CD8-positive, alpha-beta T cell (primary cell): ENCODE measurements at regions of chr22 and their contacts with region 1.

Region 1: DNA sequence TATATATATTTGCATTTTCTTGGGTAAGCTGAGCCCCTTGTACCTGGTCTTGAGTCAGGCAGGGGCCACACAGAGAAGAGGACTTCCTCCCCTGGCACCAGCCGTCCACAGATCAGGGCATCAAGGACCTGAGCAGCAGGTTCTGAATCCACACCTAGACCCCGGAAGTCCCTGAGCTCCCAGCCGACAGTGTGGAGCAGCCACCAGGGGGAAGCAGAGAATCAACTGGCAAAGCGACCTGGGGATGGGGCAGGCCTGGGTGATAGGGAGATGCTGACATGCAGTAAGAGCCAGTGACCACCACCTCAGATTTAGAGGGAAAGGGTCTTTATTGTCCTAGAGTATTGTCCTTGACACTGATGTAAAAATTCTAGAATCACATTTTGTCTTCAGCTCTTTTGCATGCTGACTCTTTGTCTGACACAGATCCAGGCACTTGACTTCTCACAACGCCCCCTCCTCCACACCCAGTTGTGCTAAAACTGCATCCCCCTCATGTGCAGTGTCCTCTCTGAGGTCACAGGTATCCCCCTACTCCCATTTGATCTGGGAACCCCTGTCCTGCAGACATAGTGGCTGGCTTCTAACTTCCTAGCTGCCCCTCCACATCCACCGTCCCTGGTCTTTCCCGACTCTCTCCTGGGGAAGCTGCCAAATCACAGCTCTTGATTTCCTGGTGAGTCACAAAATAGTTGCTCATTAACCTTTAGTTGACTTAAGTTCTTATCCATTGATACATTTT is 109.3 kb downstream of the GGTLC2 start:
- DNase-seq: peak; percentile 63 to 90 (median 83)
- ATAC-seq: peak; percentile 85
- H3K4me3 ChIP-seq: peak overlapping the region in 1 of 2 experiments; percentile 25
- H3K4me3 Mint-ChIP-seq: peak overlapping the region; percentile 60
- H3K27ac ChIP-seq: peak overlapping the region; percentile 44 to 69
- H3K27ac Mint-ChIP-seq: peak overlapping the region; percentile 94
- H3K4me1 ChIP-seq: peaks cover 44% of the 10 kb centered on the region
- H3K4me1 Mint-ChIP-seq: peaks cover 66% of the 10 kb centered on the region
- H3K27me3 ChIP-seq: no peaks in the 10 kb centered on the region
- H3K27me3 Mint-ChIP-seq: no peaks in the 10 kb centered on the region
- CTCF ChIP-seq: peak; percentile 70

Region 2: DNA sequence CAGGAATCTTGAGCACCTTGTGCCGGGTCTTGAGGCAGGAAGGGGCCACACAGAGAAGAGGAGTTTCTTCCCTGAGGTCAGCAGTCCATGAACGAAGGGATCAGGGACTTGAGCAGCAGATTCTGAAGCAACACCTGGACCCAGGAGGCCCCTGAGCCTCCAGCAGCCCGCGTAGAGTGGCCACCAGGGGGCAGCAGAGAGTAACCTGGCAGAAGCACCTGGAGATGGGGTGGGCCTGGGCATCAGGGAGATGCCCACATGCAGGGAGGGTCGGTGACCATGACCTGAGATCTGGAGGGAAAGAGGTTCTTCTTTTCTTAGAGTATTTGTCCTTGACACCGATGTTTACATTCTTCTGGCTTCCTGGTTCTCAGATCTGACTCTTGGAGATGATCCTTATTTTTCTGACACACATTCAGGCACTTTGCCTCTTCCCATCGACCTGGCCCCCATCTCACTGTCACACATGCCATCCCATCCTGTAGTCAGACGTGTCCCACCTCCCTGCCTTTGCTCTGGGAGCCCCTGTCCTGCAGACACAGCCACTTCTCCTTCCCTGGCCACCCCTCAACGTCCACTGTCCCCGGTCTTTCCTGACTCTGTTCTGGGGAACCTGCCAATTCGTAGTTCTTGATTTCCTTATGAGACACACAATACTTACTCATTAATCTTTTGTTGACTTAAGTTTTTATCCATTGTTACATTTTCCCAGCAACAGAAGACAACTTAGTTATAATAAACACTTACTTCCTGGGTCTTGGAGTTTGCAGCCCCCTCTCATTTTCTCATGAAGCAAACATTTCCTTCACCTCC is 42.8 kb before region 1 on chr22:
- CTCF ChIA-PET with region 1: interaction called, 19 read pairs
- POLR2A ChIA-PET with region 1: no interaction called
- intact Hi-C with region 1: loop called (anchors 1 to 2 kb)
- DNase-seq: peak; percentile 61 to 90 (median 79)
- ATAC-seq: peak; percentile 70
- H3K4me3 ChIP-seq: no peak overlapping the region
- H3K4me3 Mint-ChIP-seq: no peak overlapping the region
- H3K27ac ChIP-seq: no peak overlapping the region
- H3K27ac Mint-ChIP-seq: no peak overlapping the region
- H3K4me1 ChIP-seq: no peaks in the 10 kb centered on the region
- H3K4me1 Mint-ChIP-seq: no peaks in the 10 kb centered on the region
- H3K27me3 ChIP-seq: no peaks in the 10 kb centered on the region
- H3K27me3 Mint-ChIP-seq: no peaks in the 10 kb centered on the region
- CTCF ChIP-seq: peak; percentile 87

Region 3: GRCh38 chr22:22770280-22770871 is 16.7 kb after region 1 on chr22:
- CTCF ChIA-PET with region 1: interaction called, 167 read pairs
- POLR2A ChIA-PET with region 1: interaction called, 31 read pairs
- intact Hi-C with region 1: loop called (anchors 1 kb)
- DNase-seq: peak in 6 of 9 experiments; percentile 41 to 66 (median 59)
- ATAC-seq: peak; percentile 70
- H3K4me3 ChIP-seq: no peak overlapping the region
- H3K4me3 Mint-ChIP-seq: no peak overlapping the region
- H3K27ac ChIP-seq: peak overlapping the region in 1 of 2 experiments; percentile 60
- H3K27ac Mint-ChIP-seq: peak overlapping the region; percentile 73
- H3K4me1 ChIP-seq: no peaks in the 10 kb centered on the region
- H3K4me1 Mint-ChIP-seq: peaks cover 56% of the 10 kb centered on the region
- H3K27me3 ChIP-seq: no peaks in the 10 kb centered on the region
- H3K27me3 Mint-ChIP-seq: no peaks in the 10 kb centered on the region
- CTCF ChIP-seq: peak; percentile 74

Region 4: DNA sequence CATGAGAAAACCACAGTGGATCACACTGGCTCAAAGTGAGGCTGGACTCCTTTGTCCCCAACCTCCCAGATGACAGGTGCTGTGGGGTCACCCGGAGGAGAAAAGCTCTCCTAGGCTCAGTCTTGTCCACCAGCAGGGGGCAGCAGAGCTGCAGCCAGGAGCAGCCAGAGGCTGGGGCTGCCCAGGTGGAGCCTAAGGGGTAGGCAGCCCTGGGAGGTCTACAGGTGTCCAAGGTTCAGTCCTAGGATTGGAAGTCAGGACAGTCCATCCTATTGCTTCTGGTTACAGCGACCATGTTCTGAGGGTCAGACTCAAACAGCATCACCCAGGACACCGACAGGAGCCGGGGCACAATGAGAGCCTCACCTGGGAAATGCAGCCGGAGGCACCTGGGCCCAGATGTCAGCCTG is 56.3 kb after region 1 on chr22:
- CTCF ChIA-PET with region 1: interaction called, 108 read pairs
- POLR2A ChIA-PET with region 1: interaction called, 5 read pairs
- intact Hi-C with region 1: loop called (anchors 2 kb)
- DNase-seq: peak; percentile 57 to 89 (median 70)
- ATAC-seq: peak; percentile 84
- H3K4me3 ChIP-seq: no peak overlapping the region
- H3K4me3 Mint-ChIP-seq: peak overlapping the region; percentile 37
- H3K27ac ChIP-seq: peak overlapping the region in 1 of 2 experiments; percentile 55
- H3K27ac Mint-ChIP-seq: peak overlapping the region; percentile 49
- H3K4me1 ChIP-seq: peaks cover 21% of the 10 kb centered on the region
- H3K4me1 Mint-ChIP-seq: peaks cover 53% of the 10 kb centered on the region
- H3K27me3 ChIP-seq: no peaks in the 10 kb centered on the region
- H3K27me3 Mint-ChIP-seq: no peaks in the 10 kb centered on the region
- CTCF ChIP-seq: peak; percentile 64

Region 5: DNA sequence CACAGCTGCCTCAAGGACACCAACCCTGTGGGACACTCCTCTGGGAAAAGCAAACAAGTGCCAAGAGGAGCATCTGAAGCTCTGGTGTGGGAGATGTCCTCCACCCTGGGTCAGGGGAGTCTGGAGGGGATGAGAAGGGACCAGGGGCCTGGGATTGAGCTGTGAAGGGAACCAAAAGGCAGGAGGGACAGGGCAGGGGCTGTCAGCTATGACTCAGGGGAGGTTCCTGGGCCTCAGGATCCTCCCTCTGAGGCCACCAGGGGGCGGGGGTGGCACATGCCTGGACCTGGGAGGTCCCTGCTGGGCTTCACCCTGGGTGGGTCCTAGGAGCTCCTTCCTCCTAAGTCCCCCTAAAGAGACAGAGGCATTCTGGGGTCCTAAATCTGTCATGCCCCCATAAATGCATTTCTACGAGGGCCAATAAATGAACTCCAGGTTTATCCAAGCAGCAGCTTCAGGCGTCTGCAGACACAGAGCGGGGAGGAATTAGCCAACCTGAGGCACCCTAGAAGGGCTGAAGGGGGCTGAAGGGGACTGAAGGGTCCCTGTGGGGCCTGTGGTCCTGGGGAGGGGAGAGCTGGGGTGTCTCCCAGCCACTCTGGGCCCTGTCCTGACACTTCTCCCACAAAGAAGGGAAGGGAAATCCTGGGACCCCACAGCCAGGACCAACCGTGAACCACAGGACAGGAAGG is 102.1 kb after region 1 on chr22:
- CTCF ChIA-PET with region 1: interaction called, 14 read pairs
- POLR2A ChIA-PET with region 1: no interaction called
- intact Hi-C with region 1: no loop called
- DNase-seq: peak in 8 of 9 experiments; percentile 19 to 69 (median 40)
- ATAC-seq: peak; percentile 49
- H3K4me3 ChIP-seq: no peak overlapping the region
- H3K4me3 Mint-ChIP-seq: no peak overlapping the region
- H3K27ac ChIP-seq: no peak overlapping the region
- H3K27ac Mint-ChIP-seq: no peak overlapping the region
- H3K4me1 ChIP-seq: no peaks in the 10 kb centered on the region
- H3K4me1 Mint-ChIP-seq: peaks cover 1% of the 10 kb centered on the region
- H3K27me3 ChIP-seq: no peaks in the 10 kb centered on the region
- H3K27me3 Mint-ChIP-seq: no peaks in the 10 kb centered on the region
- CTCF ChIP-seq: peak; percentile 35

Region 6: GRCh38 chr22:22877523-22878210 is 124.0 kb after region 1 on chr22:
- CTCF ChIA-PET with region 1: interaction called, 279 read pairs
- POLR2A ChIA-PET with region 1: interaction called, 7 read pairs
- intact Hi-C with region 1: loop called (anchors 1 kb)
- DNase-seq: peak; percentile 56 to 91 (median 81)
- ATAC-seq: peak; percentile 59
- H3K4me3 ChIP-seq: no peak overlapping the region
- H3K4me3 Mint-ChIP-seq: no peak overlapping the region
- H3K27ac ChIP-seq: no peak overlapping the region
- H3K27ac Mint-ChIP-seq: peak overlapping the region; percentile 41
- H3K4me1 ChIP-seq: no peaks in the 10 kb centered on the region
- H3K4me1 Mint-ChIP-seq: peaks cover 7% of the 10 kb centered on the region
- H3K27me3 ChIP-seq: no peaks in the 10 kb centered on the region
- H3K27me3 Mint-ChIP-seq: no peaks in the 10 kb centered on the region
- CTCF ChIP-seq: peak; percentile 78

Region 7: GRCh38 chr22:22981670-22982571 is 228.2 kb after region 1 on chr22:
- CTCF ChIA-PET with region 1: no interaction called
- POLR2A ChIA-PET with region 1: no interaction called
- intact Hi-C with region 1: no loop called
- DNase-seq: no peak
- ATAC-seq: no peak
- H3K4me3 ChIP-seq: no peak overlapping the region
- H3K4me3 Mint-ChIP-seq: no peak overlapping the region
- H3K27ac ChIP-seq: no peak overlapping the region
- H3K27ac Mint-ChIP-seq: no peak overlapping the region
- H3K4me1 ChIP-seq: peaks cover 9% of the 10 kb centered on the region
- H3K4me1 Mint-ChIP-seq: peaks cover 24% of the 10 kb centered on the region
- H3K27me3 ChIP-seq: no peaks in the 10 kb centered on the region
- H3K27me3 Mint-ChIP-seq: peaks cover 2% of the 10 kb centered on the region
- CTCF ChIP-seq: no peak

Region 8: GRCh38 chr22:23012081-23012622 is 258.5 kb after region 1 on chr22:
- CTCF ChIA-PET with region 1: no interaction called
- POLR2A ChIA-PET with region 1: no interaction called
- intact Hi-C with region 1: no loop called
- DNase-seq: peak in 4 of 9 experiments; percentile 4 to 62 (median 20)
- ATAC-seq: peak; percentile 85
- H3K4me3 ChIP-seq: no peak overlapping the region
- H3K4me3 Mint-ChIP-seq: no peak overlapping the region
- H3K27ac ChIP-seq: no peak overlapping the region
- H3K27ac Mint-ChIP-seq: no peak overlapping the region
- H3K4me1 ChIP-seq: peaks cover 23% of the 10 kb centered on the region
- H3K4me1 Mint-ChIP-seq: peaks cover 22% of the 10 kb centered on the region
- H3K27me3 ChIP-seq: no peaks in the 10 kb centered on the region
- H3K27me3 Mint-ChIP-seq: peaks cover 27% of the 10 kb centered on the region
- CTCF ChIP-seq: no peak